BJ (cell line): ENCODE measurements at regions of chr20 and their contacts with region 1.

Region 1: DNA sequence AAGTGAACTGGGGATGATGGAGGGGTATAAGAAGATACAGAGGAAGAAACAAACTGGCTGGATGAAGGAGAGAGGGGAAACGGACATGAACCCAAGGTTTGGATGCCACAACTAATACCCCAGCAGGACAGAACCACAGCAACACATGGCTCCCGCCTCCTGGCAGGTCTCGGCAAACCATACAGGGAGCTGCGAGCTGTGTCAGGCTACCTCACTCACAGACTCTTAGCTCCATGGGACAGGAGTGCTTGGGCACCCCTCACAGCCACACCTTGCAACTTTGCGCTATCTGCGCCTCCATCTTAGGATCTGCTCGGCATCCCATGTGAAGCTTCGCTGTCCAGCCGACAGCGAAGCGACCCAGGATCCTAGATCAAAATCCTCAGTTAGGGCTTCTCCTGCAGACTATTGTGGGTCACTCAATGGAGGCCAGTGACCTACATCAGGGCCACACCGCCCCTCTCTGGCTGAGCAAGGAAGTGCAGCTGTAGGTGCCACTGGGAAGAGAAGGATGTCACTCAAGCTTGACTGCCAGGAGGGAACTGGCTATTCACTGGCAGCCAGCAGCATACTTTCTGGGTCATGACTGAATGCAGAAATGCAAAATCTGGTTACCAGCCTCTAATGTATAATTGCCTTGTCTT is 174.4 kb upstream of the RIN2 start:
- DNase-seq: no peak
- H3K4me3 ChIP-seq: no peak overlapping the region
- H3K27me3 ChIP-seq: no peaks in the 10 kb centered on the region
- CTCF ChIP-seq: peak; percentile 87

Region 2: DNA sequence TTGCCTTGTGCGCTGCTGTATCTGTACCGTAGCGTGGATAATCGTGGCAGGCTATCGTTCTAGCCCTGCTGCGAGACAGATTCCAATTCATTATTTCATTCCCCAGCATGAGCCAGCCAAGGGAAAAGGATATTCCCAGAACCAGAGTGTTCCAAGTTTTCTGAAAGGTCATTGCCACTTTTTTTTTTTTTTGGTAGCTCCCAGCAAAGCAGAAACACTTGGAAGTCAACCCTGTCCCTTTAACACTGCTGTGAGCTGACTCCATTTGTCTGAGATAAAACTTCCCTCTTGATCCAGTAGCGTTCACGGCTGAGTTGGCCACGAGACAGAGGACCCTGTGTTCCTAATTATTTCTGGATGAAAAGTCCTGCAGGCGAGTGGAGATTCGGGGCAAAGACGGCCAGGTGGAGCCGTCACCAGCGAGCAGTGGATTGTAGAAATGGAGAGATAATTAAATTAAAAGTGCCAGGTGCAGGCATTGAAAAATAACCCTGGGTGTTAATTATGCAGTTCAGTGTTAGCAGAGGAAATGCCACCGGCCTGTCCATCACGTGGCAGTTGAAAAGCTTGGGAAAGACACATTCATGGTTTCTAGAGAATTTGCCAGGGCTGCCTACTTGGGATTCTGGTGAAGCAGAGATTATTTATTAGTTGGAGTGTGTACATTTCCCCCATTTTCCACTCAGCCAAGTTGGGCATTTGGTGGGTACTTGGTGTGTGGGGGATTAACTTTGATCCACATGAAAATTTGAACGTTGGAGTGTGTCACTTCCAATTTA is 207.0 kb before region 1 on chr20:
- CTCF ChIA-PET with region 1: no interaction called
- POLR2A ChIA-PET with region 1: no interaction called
- DNase-seq: no peak
- H3K4me3 ChIP-seq: no peak overlapping the region
- H3K27me3 ChIP-seq: no peaks in the 10 kb centered on the region
- CTCF ChIP-seq: no peak

Region 3: GRCh38 chr20:19560881-19561480 is 22.7 kb before region 1 on chr20:
- CTCF ChIA-PET with region 1: interaction called, 11 read pairs
- POLR2A ChIA-PET with region 1: no interaction called
- DNase-seq: peak; percentile 52
- H3K4me3 ChIP-seq: no peak overlapping the region
- H3K27me3 ChIP-seq: no peaks in the 10 kb centered on the region
- CTCF ChIP-seq: no peak

Region 4: DNA sequence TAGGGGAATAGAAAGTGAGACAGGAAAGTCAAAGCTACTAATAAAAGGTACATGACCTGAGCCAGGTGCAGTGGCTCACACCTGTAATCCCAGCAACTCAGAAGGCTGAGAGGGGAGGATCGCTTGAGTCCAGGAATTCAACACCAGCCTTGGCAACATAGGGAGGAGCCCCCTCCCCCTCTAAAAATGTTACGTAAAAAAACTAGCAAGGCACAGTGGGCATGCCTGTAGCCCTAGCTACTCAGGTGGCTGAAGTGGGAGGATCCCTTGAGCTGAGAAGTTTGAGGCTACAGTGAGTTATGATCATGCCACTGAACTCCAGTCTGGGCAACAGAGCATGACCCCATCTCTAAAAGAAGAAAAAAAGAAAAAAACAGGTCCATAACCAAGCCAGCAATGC is 11.7 kb before region 1 on chr20:
- CTCF ChIA-PET with region 1: interaction called, 18 read pairs
- POLR2A ChIA-PET with region 1: no interaction called
- DNase-seq: no peak
- H3K4me3 ChIP-seq: no peak overlapping the region
- H3K27me3 ChIP-seq: no peaks in the 10 kb centered on the region
- CTCF ChIP-seq: no peak